Endothelial cell of umbilical vein (primary cell): ENCODE measurements at regions of chr11 and their contacts with region 1.

Region 1: DNA sequence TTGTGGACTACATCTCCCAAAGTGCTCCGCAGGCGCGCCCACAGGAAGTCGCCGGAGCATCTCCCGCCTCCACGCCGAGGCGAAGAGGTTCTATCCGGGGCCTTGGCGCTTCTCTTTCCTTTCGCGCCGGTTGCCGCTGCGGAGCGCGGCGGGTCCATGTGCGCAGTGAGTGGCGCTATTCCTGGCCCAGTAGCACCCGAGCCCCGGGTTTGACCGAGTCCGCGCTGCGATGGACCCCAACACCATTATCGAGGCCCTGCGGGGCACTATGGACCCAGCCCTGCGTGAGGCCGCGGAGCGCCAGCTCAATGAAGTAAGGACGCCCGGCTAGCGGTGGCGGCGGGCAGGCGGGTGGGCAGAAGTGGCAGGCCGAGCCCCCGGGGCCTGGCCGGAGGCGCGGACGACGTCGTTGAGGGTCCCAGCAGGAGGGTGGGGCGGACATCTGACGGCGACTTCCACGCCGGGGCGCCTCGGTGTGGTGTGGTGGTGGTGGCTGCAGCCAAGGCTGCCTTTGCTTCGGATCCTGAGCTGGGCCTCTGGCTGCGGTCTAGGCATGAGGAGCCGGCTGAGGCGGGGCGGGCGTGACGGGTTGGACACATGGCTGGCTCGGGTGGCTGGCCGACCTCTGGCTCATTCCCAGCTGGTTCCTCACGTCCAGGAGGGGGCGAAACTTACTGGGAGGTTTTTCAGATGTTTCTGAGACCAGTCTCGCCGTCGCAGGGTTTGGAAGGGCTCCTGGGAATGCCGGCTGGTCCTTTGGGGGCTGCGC is at the start of gene IPO7:
- DNase-seq: peak; percentile 90
- H3K4me3 ChIP-seq: peak within 1 kb of the TSS; percentile 65 to 90 (median 68)
- H3K27ac ChIP-seq: peak within 1 kb of the TSS; percentile 76
- H3K4me1 ChIP-seq: peaks cover 18% of the 10 kb centered on the region
- H3K27me3 ChIP-seq: no peaks in the 10 kb centered on the region
- CTCF ChIP-seq: peak; percentile 42 to 49
- POLR2A ChIP-seq: peak; percentile 86
- total RNA-seq, gene IPO7: 161 and 170 TPM in 2 replicates

Region 2: DNA sequence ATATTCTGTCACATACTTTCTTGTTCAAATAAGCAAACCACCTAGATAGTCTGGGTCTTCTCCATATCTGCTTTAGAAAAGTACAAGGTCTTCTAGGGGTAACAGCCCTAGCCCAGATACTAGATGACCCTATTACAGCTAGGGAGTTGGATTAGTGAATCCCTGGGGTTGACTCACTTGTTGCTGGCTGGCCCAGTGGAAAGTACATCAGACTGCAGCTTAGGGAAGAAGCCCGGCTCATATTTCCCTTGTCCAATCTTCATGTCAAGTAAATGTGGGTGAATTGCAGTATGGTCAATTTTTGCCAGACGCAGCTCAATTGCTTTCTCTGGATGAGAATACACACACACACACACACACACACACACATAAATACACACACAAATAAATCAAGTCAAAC is 214.3 kb before region 1 on chr11:
- CTCF ChIA-PET with region 1: interaction called, 7 read pairs
- POLR2A ChIA-PET with region 1: no interaction called
- dilution Hi-C with region 1: no loop called
- intact Hi-C with region 1: loop called (anchors 10 kb)
- DNase-seq: peak; percentile 17
- H3K4me3 ChIP-seq: no peak overlapping the region
- H3K27ac ChIP-seq: no peak overlapping the region
- H3K4me1 ChIP-seq: peaks cover 14% of the 10 kb centered on the region
- H3K27me3 ChIP-seq: no peaks in the 10 kb centered on the region
- CTCF ChIP-seq: no peak
- POLR2A ChIP-seq: no peak

Region 3: GRCh38 chr11:9314291-9315036 is 70.3 kb before region 1 on chr11 and contains the start of gene TMEM41B:
- CTCF ChIA-PET with region 1: interaction called, 20 read pairs
- POLR2A ChIA-PET with region 1: interaction called, 3 read pairs
- dilution Hi-C with region 1: no loop called
- intact Hi-C with region 1: loop called (anchors 1 kb)
- DNase-seq: peak; percentile 98
- H3K4me3 ChIP-seq: peak within 1 kb of the TSS; percentile 60 to 98 (median 93)
- H3K27ac ChIP-seq: peak within 1 kb of the TSS; percentile 87
- H3K4me1 ChIP-seq: peaks cover 15% of the 10 kb centered on the region
- H3K27me3 ChIP-seq: no peaks in the 10 kb centered on the region
- CTCF ChIP-seq: no peak
- POLR2A ChIP-seq: peak; percentile 80
- total RNA-seq, gene TMEM41B: 38.6 and 39.0 TPM in 2 replicates

Region 4: GRCh38 chr11:9363954-9364912 is 20.5 kb before region 1 on chr11:
- CTCF ChIA-PET with region 1: interaction called, 10 read pairs
- POLR2A ChIA-PET with region 1: interaction called, 3 read pairs
- dilution Hi-C with region 1: no loop called
- intact Hi-C with region 1: loop called (anchors 1 kb)
- DNase-seq: peak; percentile 96
- H3K4me3 ChIP-seq: peak overlapping the region in 2 of 3 experiments; percentile 23 to 46
- H3K27ac ChIP-seq: peak overlapping the region; percentile 92
- H3K4me1 ChIP-seq: peaks cover 17% of the 10 kb centered on the region
- H3K27me3 ChIP-seq: no peaks in the 10 kb centered on the region
- CTCF ChIP-seq: no peak
- POLR2A ChIP-seq: peak; percentile 67

Region 5: DNA sequence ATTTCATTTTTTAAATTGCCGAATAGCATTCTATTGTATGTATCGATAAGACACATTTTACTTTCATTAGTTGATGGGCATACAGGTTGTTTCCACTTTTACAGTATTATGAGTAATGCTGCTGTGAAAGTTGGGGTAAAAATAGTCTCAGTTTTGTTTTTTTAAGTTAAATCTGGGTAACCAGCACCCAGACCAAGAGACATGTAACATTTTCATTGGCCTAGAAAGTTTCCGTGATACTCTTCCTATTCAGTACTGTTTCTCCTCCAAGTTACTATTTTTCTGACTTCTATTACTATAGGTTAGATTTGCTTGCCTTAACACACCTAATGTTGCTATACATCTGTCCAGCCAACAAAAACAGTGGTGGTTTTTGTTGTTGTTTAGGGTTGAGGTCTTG is 12.0 kb after region 1 on chr11:
- CTCF ChIA-PET with region 1: interaction called, 12 read pairs
- POLR2A ChIA-PET with region 1: no interaction called
- dilution Hi-C with region 1: no loop called
- intact Hi-C with region 1: no loop called
- DNase-seq: no peak
- H3K4me3 ChIP-seq: no peak overlapping the region
- H3K27ac ChIP-seq: no peak overlapping the region
- H3K4me1 ChIP-seq: no peaks in the 10 kb centered on the region
- H3K27me3 ChIP-seq: no peaks in the 10 kb centered on the region
- CTCF ChIP-seq: no peak
- POLR2A ChIP-seq: no peak